ENCODE measurements at regions of chr2 and their contacts with region 1.

Region 1: DNA sequence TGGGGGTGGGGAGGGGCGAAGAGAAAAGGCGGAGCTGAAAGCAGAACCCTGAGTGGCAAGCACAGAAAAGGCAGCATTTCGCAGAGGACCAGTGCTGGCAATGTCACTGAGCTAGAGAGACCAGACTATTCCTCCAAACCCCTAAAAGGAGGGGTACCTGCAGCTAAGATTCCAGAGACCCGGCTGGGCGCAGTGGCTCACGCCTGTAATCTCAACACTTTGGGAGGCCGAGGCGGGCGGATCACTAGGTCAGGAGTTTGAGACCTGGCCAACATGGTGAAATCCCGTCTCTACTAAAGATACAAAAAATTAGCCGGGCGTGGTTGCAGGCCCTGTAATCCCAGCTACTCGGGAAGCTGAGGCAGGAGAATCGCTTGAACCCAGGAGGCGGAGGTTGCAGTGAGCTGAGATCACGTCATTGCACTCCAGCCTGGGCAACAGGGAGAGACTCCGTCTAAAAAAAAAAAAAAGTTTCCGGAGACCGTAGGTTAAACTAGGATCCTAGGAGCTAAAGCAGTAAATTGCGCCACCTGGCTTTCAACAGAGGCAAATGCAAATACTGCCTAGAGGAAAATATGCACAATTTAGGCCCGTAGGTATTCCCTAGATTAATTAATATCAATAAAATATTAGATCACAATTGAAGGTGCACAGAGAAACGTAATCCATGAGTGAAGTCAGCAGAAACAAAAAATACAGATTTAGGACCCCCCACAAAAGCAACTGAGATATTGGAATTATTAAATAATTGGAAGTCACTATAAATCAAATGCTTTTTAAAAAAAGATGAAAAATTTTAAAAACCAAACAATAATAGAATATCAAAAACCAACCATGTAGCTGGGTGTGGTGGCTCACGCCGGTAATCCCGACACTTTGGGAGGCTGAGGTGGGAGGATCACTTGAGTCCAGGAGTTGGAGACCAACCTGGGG is 4.9 kb downstream of the UCN start:
- DNase-seq: peak; percentile 86
- ATAC-seq: peak; percentile 60
- H3K4me3 ChIP-seq: peak overlapping the region; percentile 49 to 77 (median 63)
- H3K27ac ChIP-seq: peak overlapping the region; percentile 42
- H3K4me1 ChIP-seq: peaks cover 33% of the 10 kb centered on the region
- H3K27me3 ChIP-seq: peaks cover 0 to 5% of the 10 kb centered on the region in 2 experiments; a peak in 3 of 5 replicates
- CTCF ChIP-seq: peak; percentile 88
- EP300 ChIP-seq: no peak
- POLR2A ChIP-seq: peak in 1 of 2 experiments; percentile 42; a peak in 1 of 4 replicates
- RAD21 ChIP-seq: peak; percentile 75

Region 2: DNA sequence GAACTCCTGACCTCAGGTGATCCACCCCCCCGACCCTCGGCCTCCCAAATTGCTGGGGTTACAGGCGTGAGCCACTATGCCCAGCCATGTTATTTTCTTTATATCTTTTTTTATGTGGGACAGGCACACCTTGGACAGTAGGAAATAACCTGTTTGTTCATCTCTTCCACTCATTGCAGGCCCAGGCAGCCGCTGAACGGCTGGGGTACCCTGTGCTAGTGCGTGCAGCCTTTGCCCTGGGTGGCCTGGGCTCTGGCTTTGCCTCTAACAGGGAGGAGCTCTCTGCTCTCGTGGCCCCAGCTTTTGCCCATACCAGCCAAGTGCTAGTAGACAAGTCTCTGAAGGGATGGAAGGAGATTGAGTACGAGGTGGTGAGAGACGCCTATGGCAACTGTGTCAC is 77.8 kb before region 1 on chr2:
- CTCF ChIA-PET with region 1: no interaction called
- POLR2A ChIA-PET with region 1: no interaction called
- in situ Hi-C with region 1: no loop called
- intact Hi-C with region 1: no loop called
- DNase-seq: no peak
- ATAC-seq: no peak
- H3K4me3 ChIP-seq: no peak overlapping the region
- H3K27ac ChIP-seq: no peak overlapping the region
- H3K4me1 ChIP-seq: peaks cover 9% of the 10 kb centered on the region; the same call in 1 of the 2 replicates
- H3K27me3 ChIP-seq: no peaks in the 10 kb centered on the region
- CTCF ChIP-seq: no peak
- EP300 ChIP-seq: no peak
- POLR2A ChIP-seq: no peak
- RAD21 ChIP-seq: no peak

Region 3: GRCh38 chr2:27249891-27250651 is 53.3 kb before region 1 on chr2:
- CTCF ChIA-PET with region 1: interaction called, 38 read pairs
- POLR2A ChIA-PET with region 1: interaction called, 6 read pairs
- in situ Hi-C with region 1: no loop called
- intact Hi-C with region 1: loop called (anchors 1 kb)
- DNase-seq: peak; percentile 68
- ATAC-seq: peak; percentile 87
- H3K4me3 ChIP-seq: peak overlapping the region; percentile 30 to 70 (median 31)
- H3K27ac ChIP-seq: no peak overlapping the region
- H3K4me1 ChIP-seq: peaks cover 25% of the 10 kb centered on the region
- H3K27me3 ChIP-seq: peaks cover 0 to 13% of the 10 kb centered on the region in 2 experiments; a peak in 3 of 5 replicates
- CTCF ChIP-seq: peak; percentile 99
- EP300 ChIP-seq: no peak
- POLR2A ChIP-seq: 0 out of 4 replicates have a peak, but pooled peaks of 1 of the 2 experiments have one; percentile 22
- RAD21 ChIP-seq: peak; percentile 97

Region 4: GRCh38 chr2:27264753-27265535 is 38.4 kb before region 1 on chr2:
- CTCF ChIA-PET with region 1: interaction called, 20 read pairs
- POLR2A ChIA-PET with region 1: no interaction called
- in situ Hi-C with region 1: no loop called
- intact Hi-C with region 1: loop called (anchors 1 kb)
- DNase-seq: peak; percentile 73
- ATAC-seq: peak; percentile 79
- H3K4me3 ChIP-seq: peak overlapping the region; percentile 56 to 77 (median 58)
- H3K27ac ChIP-seq: no peak overlapping the region
- H3K4me1 ChIP-seq: peaks cover 26% of the 10 kb centered on the region
- H3K27me3 ChIP-seq: peaks cover 19 to 79% of the 10 kb centered on the region in 2 experiments
- CTCF ChIP-seq: peak; percentile 90
- EP300 ChIP-seq: 0 out of 4 replicates have a peak, but pooled peaks of 1 of the 2 experiments have one; percentile 22
- POLR2A ChIP-seq: no peak
- RAD21 ChIP-seq: peak; percentile 88

Region 5: DNA sequence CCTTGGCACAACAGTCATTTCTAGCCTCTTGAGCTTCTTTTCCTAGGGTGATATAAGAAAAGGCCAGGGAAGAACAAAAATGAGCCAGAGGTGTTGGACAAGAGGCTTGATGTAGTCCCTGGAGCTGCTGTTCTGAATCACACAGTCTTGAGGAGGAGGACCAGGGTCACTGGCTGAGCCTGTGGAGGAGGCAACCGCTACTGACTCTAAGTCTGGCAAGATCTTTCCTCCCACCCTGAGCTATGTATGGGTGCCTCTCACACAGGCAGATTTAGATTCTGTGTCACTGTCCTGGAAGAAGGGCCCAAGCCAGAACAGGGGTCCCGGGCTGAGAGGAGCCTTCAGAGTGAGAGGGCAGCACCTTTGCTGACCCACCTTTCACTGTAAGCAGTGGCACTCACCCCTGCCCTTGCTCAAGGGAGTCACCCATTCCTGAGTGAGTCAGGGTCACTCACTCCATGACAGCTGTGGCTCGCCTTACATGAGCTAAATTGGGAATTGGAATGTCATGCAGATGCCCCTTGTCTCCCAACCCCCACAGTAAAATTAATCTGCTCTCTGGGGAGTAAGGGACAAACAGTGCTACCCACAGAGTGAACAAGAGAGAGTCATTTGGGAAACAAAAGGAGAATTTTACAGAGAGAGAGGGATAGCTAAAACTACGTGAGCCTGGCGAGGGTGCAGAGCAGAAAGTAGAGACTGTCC is 21.4 kb before region 1 on chr2 and contains the start of gene TRIM54:
- CTCF ChIA-PET with region 1: interaction called, 4 read pairs
- POLR2A ChIA-PET with region 1: interaction called, 5 read pairs
- in situ Hi-C with region 1: no loop called
- intact Hi-C with region 1: loop called (anchors 1 kb)
- DNase-seq: no peak
- ATAC-seq: peak; percentile 60
- H3K4me3 ChIP-seq: peak within 1 kb of the TSS in 1 of 3 experiments; percentile 26; a peak in 2 of 6 replicates
- H3K27ac ChIP-seq: no peak within 1 kb of the TSS
- H3K4me1 ChIP-seq: peaks cover 41% of the 10 kb centered on the region
- H3K27me3 ChIP-seq: peaks cover 0 to 18% of the 10 kb centered on the region in 2 experiments; a peak in 4 of 5 replicates
- CTCF ChIP-seq: no peak
- EP300 ChIP-seq: no peak
- POLR2A ChIP-seq: no peak
- RAD21 ChIP-seq: no peak
- total RNA-seq, gene TRIM54: 0.07 TPM in 1 of 2 replicates, not detected in the other

Region 6: DNA sequence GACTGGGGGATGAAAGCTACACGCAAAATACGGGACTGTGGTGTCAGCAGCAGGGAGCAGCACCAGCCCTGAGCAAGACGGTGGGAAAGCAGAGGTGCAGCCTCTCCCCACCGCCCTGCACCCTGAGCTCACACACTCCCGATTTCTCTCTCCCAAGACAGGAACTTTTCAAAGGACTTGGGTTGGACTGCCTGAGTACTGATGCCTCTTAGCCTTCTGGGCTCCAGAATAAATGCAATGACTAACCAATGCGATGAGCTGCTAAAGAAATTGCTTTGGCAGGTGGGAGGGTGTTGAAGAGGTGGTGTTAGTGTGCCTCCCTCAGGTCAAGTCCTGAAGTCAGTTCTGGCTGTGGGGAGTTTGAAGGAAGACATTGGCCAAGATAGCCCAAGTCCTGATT is 11.5 kb before region 1 on chr2:
- CTCF ChIA-PET with region 1: interaction called, 4 read pairs
- POLR2A ChIA-PET with region 1: interaction called, 22 read pairs
- in situ Hi-C with region 1: no loop called
- intact Hi-C with region 1: no loop called
- DNase-seq: peak; percentile 44
- ATAC-seq: peak; percentile 78
- H3K4me3 ChIP-seq: peak overlapping the region; percentile 13 to 52 (median 25); a peak in 2 of 6 replicates
- H3K27ac ChIP-seq: no peak overlapping the region
- H3K4me1 ChIP-seq: peaks cover 82% of the 10 kb centered on the region
- H3K27me3 ChIP-seq: no peaks in the 10 kb centered on the region
- CTCF ChIP-seq: peak; percentile 78
- EP300 ChIP-seq: no peak
- POLR2A ChIP-seq: no peak
- RAD21 ChIP-seq: no peak; the same call in 1 of the 2 replicates

Region 7: GRCh38 chr2:27509326-27509725 is 206.0 kb after region 1 on chr2:
- CTCF ChIA-PET with region 1: no interaction called
- POLR2A ChIA-PET with region 1: no interaction called
- in situ Hi-C with region 1: no loop called
- intact Hi-C with region 1: no loop called
- DNase-seq: no peak
- ATAC-seq: no peak
- H3K4me3 ChIP-seq: no peak overlapping the region
- H3K27ac ChIP-seq: no peak overlapping the region
- H3K4me1 ChIP-seq: peaks cover 15% of the 10 kb centered on the region
- H3K27me3 ChIP-seq: no peaks in the 10 kb centered on the region
- CTCF ChIP-seq: no peak
- EP300 ChIP-seq: no peak
- POLR2A ChIP-seq: no peak
- RAD21 ChIP-seq: no peak

Measured in HepG2 (cell line).